ENCODE measurements at regions of chr15 and their contacts with region 1.

Region 1: DNA sequence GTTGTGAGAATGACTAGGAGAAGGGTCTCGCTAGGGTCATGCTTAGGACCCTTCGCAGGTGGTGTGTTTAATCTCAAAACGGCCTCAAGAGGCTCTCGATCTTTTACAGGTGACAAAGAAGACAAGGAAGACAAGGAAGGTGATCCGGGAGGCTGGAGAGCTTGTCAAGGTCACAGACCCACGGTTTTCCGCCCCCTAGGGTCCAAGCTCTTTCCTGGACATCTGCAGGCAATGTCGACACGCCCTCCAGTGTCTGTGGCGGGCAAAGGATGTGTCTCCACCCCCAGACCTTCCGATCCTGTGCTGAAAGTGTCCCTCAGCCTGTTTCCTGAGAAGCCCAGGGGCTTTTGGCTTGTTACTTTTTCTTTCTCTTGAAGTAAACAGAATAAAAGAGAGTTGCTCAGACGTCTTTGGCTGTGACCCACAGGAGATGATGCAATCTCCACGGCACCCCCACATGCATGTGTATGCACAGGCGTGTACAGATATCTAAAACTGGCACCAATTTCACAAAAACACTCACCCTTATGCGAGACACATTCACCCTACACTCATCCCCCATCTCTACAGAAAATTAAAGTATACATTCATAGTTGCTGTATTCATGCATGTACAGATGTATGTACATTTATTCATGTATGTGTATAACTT is 108.8 kb downstream of the KLF13 start:
- DNase-seq: peak; percentile 73 to 94
- ATAC-seq: peak; percentile 70 to 87 (median 75)
- H3K4me3 ChIP-seq: peak overlapping the region; percentile 41
- H3K4me3 Mint-ChIP-seq: peak overlapping the region; percentile 88
- H3K27ac ChIP-seq: peak overlapping the region; percentile 95
- H3K27ac Mint-ChIP-seq: peak overlapping the region; percentile 98 to 100
- H3K4me1 ChIP-seq: peaks cover 78% of the 10 kb centered on the region
- H3K4me1 Mint-ChIP-seq: peaks cover 59 to 77% of the 10 kb centered on the region in 2 donors
- H3K27me3 ChIP-seq: no peaks in the 10 kb centered on the region
- H3K27me3 Mint-ChIP-seq: no peaks in the 10 kb centered on the region
- CTCF ChIP-seq: no peak

Region 2: GRCh38 chr15:31317421-31318327 is 117.7 kb before region 1 on chr15:
- intact Hi-C with region 1: no loop called
- DNase-seq: no peak
- ATAC-seq: peak in 1 of 3 donors; percentile 37
- H3K4me3 ChIP-seq: no peak overlapping the region
- H3K4me3 Mint-ChIP-seq: peak overlapping the region; percentile 6
- H3K27ac ChIP-seq: peak overlapping the region; percentile 20
- H3K27ac Mint-ChIP-seq: peak overlapping the region; percentile 37 to 40
- H3K4me1 ChIP-seq: peaks cover 20% of the 10 kb centered on the region
- H3K4me1 Mint-ChIP-seq: peaks cover 13 to 20% of the 10 kb centered on the region in 2 donors
- H3K27me3 ChIP-seq: no peaks in the 10 kb centered on the region
- H3K27me3 Mint-ChIP-seq: no peaks in the 10 kb centered on the region
- CTCF ChIP-seq: no peak

Region 3: GRCh38 chr15:31448635-31448979 is 13.2 kb after region 1 on chr15:
- intact Hi-C with region 1: loop called (anchors 1 kb)
- DNase-seq: no peak
- ATAC-seq: no peak
- H3K4me3 ChIP-seq: no peak overlapping the region
- H3K4me3 Mint-ChIP-seq: no peak overlapping the region
- H3K27ac ChIP-seq: no peak overlapping the region
- H3K27ac Mint-ChIP-seq: peak overlapping the region; percentile 48 to 52
- H3K4me1 ChIP-seq: peaks cover 14% of the 10 kb centered on the region
- H3K4me1 Mint-ChIP-seq: peaks cover 18 to 24% of the 10 kb centered on the region in 2 donors
- H3K27me3 ChIP-seq: no peaks in the 10 kb centered on the region
- H3K27me3 Mint-ChIP-seq: no peaks in the 10 kb centered on the region
- CTCF ChIP-seq: no peak

Region 4: GRCh38 chr15:31472636-31473384 is 37.4 kb after region 1 on chr15:
- intact Hi-C with region 1: loop called (anchors 5 kb)
- DNase-seq: peak; percentile 34 to 76
- ATAC-seq: peak; percentile 90 to 98 (median 93)
- H3K4me3 ChIP-seq: peak overlapping the region; percentile 2
- H3K4me3 Mint-ChIP-seq: peak overlapping the region; percentile 84
- H3K27ac ChIP-seq: peak overlapping the region; percentile 72
- H3K27ac Mint-ChIP-seq: peak overlapping the region; percentile 73 to 84
- H3K4me1 ChIP-seq: peaks cover 33% of the 10 kb centered on the region
- H3K4me1 Mint-ChIP-seq: peaks cover 39 to 42% of the 10 kb centered on the region in 2 donors
- H3K27me3 ChIP-seq: no peaks in the 10 kb centered on the region
- H3K27me3 Mint-ChIP-seq: no peaks in the 10 kb centered on the region
- CTCF ChIP-seq: no peak

Measured in natural killer cell (primary cell).